ENCODE measurements at regions of chr7 and their contacts with region 1.

Region 1: GRCh38 chr7:90759710-90760109 is 163.6 kb downstream of the CDK14 start:
- DNase-seq: no peak
- ATAC-seq: no peak
- H3K4me3 ChIP-seq: no peak overlapping the region
- H3K4me3 Mint-ChIP-seq: peak overlapping the region; percentile 41
- H3K27ac ChIP-seq: no peak overlapping the region
- H3K27ac Mint-ChIP-seq: peak overlapping the region; percentile 51
- H3K4me1 ChIP-seq: peaks cover 48 to 56% of the 10 kb centered on the region in 2 donors
- H3K4me1 Mint-ChIP-seq: peaks cover 83% of the 10 kb centered on the region
- H3K27me3 ChIP-seq: no peaks in the 10 kb centered on the region
- H3K27me3 Mint-ChIP-seq: no peaks in the 10 kb centered on the region
- CTCF ChIP-seq: no peak

Region 2: GRCh38 chr7:90772410-90772809 is 12.7 kb after region 1 on chr7:
- CTCF ChIA-PET with region 1: interaction called, 3 read pairs
- POLR2A ChIA-PET with region 1: no interaction called
- intact Hi-C with region 1: loop called (anchors 2 kb)
- DNase-seq: peak; percentile 77
- ATAC-seq: peak; percentile 84
- H3K4me3 ChIP-seq: peak overlapping the region in 1 of 5 experiments; percentile 13
- H3K4me3 Mint-ChIP-seq: peak overlapping the region; percentile 54
- H3K27ac ChIP-seq: peak overlapping the region; percentile 84 to 85
- H3K27ac Mint-ChIP-seq: peak overlapping the region; percentile 94
- H3K4me1 ChIP-seq: peaks cover 10 to 20% of the 10 kb centered on the region in 2 donors
- H3K4me1 Mint-ChIP-seq: peaks cover 29% of the 10 kb centered on the region
- H3K27me3 ChIP-seq: no peaks in the 10 kb centered on the region
- H3K27me3 Mint-ChIP-seq: no peaks in the 10 kb centered on the region
- CTCF ChIP-seq: no peak

Measured in B cell (primary cell).